HepG2 (cell line): ENCODE measurements at regions of chr19 and their contacts with region 1.

Region 1: GRCh38 chr19:6862673-6863078 is 24.7 kb upstream of the ADGRE1 start:
- DNase-seq: peak; percentile 83
- ATAC-seq: peak; percentile 91
- H3K4me3 ChIP-seq: no peak overlapping the region
- H3K27ac ChIP-seq: no peak overlapping the region
- H3K4me1 ChIP-seq: 0 out of 2 replicates have a peak, but pooled peaks cover 10% of the 10 kb centered on the region
- H3K27me3 ChIP-seq: peaks cover 0 to 11% of the 10 kb centered on the region in 2 experiments; a peak in 2 of 5 replicates
- CTCF ChIP-seq: peak; percentile 93
- EP300 ChIP-seq: no peak
- POLR2A ChIP-seq: no peak
- RAD21 ChIP-seq: peak; percentile 79

Region 2: DNA sequence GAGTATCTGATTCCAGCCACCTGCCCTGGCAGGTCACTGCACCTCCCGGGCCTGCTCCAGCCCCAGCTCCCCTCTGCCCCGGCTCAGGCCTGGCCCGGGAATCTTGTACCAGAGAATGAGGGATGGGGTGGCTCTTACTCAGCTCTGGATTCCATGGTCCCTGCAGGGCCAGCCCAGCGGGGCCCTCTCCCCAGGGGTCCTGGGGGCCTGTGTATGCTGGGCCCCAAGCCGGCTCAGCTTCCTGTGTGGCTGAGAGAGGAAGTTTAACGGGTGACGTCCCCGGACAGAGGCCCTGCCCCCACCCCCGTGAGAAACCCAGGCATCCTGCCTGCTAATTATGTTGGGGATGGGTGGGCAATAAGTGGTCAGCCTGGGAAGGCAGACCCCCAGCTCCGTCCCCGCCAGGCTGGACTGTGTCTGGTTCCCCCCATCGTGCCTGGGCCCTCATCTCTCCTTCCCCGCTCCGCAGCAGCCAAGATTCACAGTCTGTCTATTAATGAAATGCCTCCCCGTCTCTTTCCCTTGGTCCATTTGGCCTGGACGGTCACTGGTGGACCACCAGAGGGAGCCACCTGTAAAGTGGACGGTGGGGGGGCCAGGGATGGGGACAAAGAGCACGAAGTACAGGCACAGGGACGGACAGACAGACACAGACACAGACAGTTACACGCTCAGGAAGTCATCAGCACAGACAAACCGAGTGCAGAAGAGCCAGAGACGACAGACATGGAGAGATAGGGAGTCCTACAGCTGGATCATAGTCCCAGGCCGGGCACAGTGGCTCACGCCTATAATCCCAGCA is 380.9 kb before region 1 on chr19 and contains the start of gene DENND1C:
- CTCF ChIA-PET with region 1: interaction called, 6 read pairs
- POLR2A ChIA-PET with region 1: no interaction called
- in situ Hi-C with region 1: no loop called
- intact Hi-C with region 1: loop called (anchors 10 kb)
- DNase-seq: peak; percentile 47
- ATAC-seq: peak; percentile 85
- H3K4me3 ChIP-seq: peak within 1 kb of the TSS in 1 of 3 experiments; percentile 34; a peak in 1 of 6 replicates
- H3K27ac ChIP-seq: no peak within 1 kb of the TSS
- H3K4me1 ChIP-seq: peaks cover 23% of the 10 kb centered on the region
- H3K27me3 ChIP-seq: peaks cover 2 to 16% of the 10 kb centered on the region in 2 experiments; a peak in 3 of 5 replicates
- CTCF ChIP-seq: peak; percentile 88
- EP300 ChIP-seq: no peak
- POLR2A ChIP-seq: no peak
- RAD21 ChIP-seq: peak; percentile 64
- total RNA-seq, gene DENND1C: 0.04 TPM in 1 of 2 replicates, not detected in the other

Region 3: GRCh38 chr19:6516659-6517291 is 345.9 kb before region 1 on chr19:
- CTCF ChIA-PET with region 1: no interaction called
- POLR2A ChIA-PET with region 1: no interaction called
- in situ Hi-C with region 1: no loop called
- intact Hi-C with region 1: loop called (anchors 2 kb)
- DNase-seq: peak; percentile 60
- ATAC-seq: peak; percentile 96
- H3K4me3 ChIP-seq: peak overlapping the region; percentile 54 to 88 (median 78); a peak in 5 of 6 replicates
- H3K27ac ChIP-seq: no peak overlapping the region
- H3K4me1 ChIP-seq: peaks cover 46% of the 10 kb centered on the region
- H3K27me3 ChIP-seq: no peaks in the 10 kb centered on the region; a peak in 1 of 5 replicates
- CTCF ChIP-seq: peak; percentile 98
- EP300 ChIP-seq: no peak
- POLR2A ChIP-seq: no peak
- RAD21 ChIP-seq: peak; percentile 93

Region 4: GRCh38 chr19:6632002-6632621 is 230.6 kb before region 1 on chr19:
- CTCF ChIA-PET with region 1: interaction called, 5 read pairs
- POLR2A ChIA-PET with region 1: no interaction called
- in situ Hi-C with region 1: loop called (anchors 25 kb)
- intact Hi-C with region 1: loop called (anchors 2 kb)
- DNase-seq: peak; percentile 66
- ATAC-seq: no peak; the same call in 2 of the 3 replicates
- H3K4me3 ChIP-seq: no peak overlapping the region
- H3K27ac ChIP-seq: no peak overlapping the region
- H3K4me1 ChIP-seq: no peaks in the 10 kb centered on the region
- H3K27me3 ChIP-seq: no peaks in the 10 kb centered on the region; a peak in 1 of 5 replicates
- CTCF ChIP-seq: peak; percentile 72
- EP300 ChIP-seq: no peak
- POLR2A ChIP-seq: no peak
- RAD21 ChIP-seq: no peak

Region 5: GRCh38 chr19:6718741-6719539 is 143.7 kb before region 1 on chr19:
- CTCF ChIA-PET with region 1: no interaction called
- POLR2A ChIA-PET with region 1: interaction called, 5 read pairs
- in situ Hi-C with region 1: no loop called
- intact Hi-C with region 1: loop called (anchors 2 kb)
- DNase-seq: peak; percentile 93
- ATAC-seq: peak; percentile 69
- H3K4me3 ChIP-seq: peak overlapping the region; percentile 70 to 100 (median 89)
- H3K27ac ChIP-seq: peak overlapping the region; percentile 90
- H3K4me1 ChIP-seq: peaks cover 60% of the 10 kb centered on the region
- H3K27me3 ChIP-seq: peaks cover 0 to 7% of the 10 kb centered on the region in 2 experiments; a peak in 1 of 5 replicates
- CTCF ChIP-seq: no peak; the same call in 1 of the 2 replicates
- EP300 ChIP-seq: no peak
- POLR2A ChIP-seq: peak; percentile 85 to 88; a peak in 3 of 4 replicates
- RAD21 ChIP-seq: peak; percentile 35; the same call in 1 of the 2 replicates

Region 6: GRCh38 chr19:6737284-6738046 is 125.2 kb before region 1 on chr19 and contains the start of gene GPR108:
- CTCF ChIA-PET with region 1: interaction called, 31 read pairs
- POLR2A ChIA-PET with region 1: interaction called, 11 read pairs
- in situ Hi-C with region 1: loop called (anchors 5 kb)
- intact Hi-C with region 1: no loop called
- DNase-seq: peak; percentile 100
- ATAC-seq: peak; percentile 72
- H3K4me3 ChIP-seq: peak within 1 kb of the TSS; percentile 82 to 100 (median 90)
- H3K27ac ChIP-seq: peak within 1 kb of the TSS; percentile 89
- H3K4me1 ChIP-seq: peaks cover 56% of the 10 kb centered on the region
- H3K27me3 ChIP-seq: no peaks in the 10 kb centered on the region; a peak in 1 of 5 replicates
- CTCF ChIP-seq: 0 out of 2 replicates have a peak, but pooled peaks have one; percentile 13
- EP300 ChIP-seq: no peak
- POLR2A ChIP-seq: peak; percentile 56 to 67; a peak in 3 of 4 replicates
- RAD21 ChIP-seq: peak; percentile 49; the same call in 1 of the 2 replicates
- total RNA-seq, gene GPR108: 24.1 and 36.4 TPM in 2 replicates

Region 7: GRCh38 chr19:6753178-6754031 is 109.3 kb before region 1 on chr19:
- CTCF ChIA-PET with region 1: no interaction called
- POLR2A ChIA-PET with region 1: interaction called, 3 read pairs
- in situ Hi-C with region 1: no loop called
- intact Hi-C with region 1: loop called (anchors 5 kb)
- DNase-seq: peak; percentile 89
- ATAC-seq: peak; percentile 91
- H3K4me3 ChIP-seq: peak overlapping the region; percentile 55 to 82 (median 75)
- H3K27ac ChIP-seq: peak overlapping the region; percentile 95
- H3K4me1 ChIP-seq: peaks cover 27% of the 10 kb centered on the region
- H3K27me3 ChIP-seq: no peaks in the 10 kb centered on the region
- CTCF ChIP-seq: peak; percentile 96
- EP300 ChIP-seq: no peak
- POLR2A ChIP-seq: peak in 1 of 2 experiments; percentile 37; a peak in 3 of 4 replicates
- RAD21 ChIP-seq: peak; percentile 94